ENCODE measurements at regions of chr2 and their contacts with region 1.

Region 1: DNA sequence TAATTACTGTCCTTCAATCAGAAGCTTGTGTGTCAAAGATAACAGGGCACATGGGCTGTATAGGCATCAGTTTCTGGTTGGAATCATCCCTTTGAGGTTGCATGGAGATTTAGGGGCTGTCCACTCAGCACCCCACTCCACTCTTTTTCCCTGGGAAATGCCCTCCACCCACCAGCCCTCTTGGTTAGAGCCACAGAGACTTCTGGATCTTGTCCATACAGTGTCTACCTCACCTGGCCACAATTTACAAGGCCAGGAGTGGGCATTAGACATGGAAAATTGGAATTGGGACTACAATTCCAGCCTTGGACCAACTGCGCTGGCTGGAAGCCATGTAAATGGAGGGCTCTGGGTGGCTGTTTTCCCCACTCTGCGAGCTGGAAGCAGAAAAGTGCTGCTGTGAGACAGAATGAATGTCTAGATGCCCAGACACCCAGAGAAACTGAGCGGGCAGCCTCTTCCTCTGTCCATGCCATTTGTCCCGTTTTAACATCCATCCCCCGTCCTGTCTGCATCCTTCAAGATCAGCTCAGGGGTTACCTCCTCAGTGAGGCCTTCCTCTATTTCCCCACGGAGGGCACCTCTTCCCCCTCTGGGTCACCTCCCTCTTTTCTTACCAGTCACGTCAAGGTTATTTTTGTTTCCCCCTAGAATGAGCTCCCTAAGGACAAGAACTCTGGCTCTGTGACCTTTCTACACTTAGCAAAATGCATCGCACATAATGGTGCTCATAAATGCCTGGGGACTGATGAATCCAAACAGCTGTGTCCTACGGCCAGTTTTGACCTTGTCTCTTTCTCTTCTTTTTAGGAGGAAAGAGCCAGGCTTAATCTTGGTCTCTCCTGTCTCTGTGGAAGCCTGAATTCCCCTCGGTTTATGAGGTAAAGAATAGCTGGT is 41.3 kb downstream of the MCFD2 start:
- DNase-seq: peak; percentile 68
- H3K4me3 ChIP-seq: no peak overlapping the region
- H3K27me3 ChIP-seq: no peaks in the 10 kb centered on the region
- CTCF ChIP-seq: no peak

Region 2: DNA sequence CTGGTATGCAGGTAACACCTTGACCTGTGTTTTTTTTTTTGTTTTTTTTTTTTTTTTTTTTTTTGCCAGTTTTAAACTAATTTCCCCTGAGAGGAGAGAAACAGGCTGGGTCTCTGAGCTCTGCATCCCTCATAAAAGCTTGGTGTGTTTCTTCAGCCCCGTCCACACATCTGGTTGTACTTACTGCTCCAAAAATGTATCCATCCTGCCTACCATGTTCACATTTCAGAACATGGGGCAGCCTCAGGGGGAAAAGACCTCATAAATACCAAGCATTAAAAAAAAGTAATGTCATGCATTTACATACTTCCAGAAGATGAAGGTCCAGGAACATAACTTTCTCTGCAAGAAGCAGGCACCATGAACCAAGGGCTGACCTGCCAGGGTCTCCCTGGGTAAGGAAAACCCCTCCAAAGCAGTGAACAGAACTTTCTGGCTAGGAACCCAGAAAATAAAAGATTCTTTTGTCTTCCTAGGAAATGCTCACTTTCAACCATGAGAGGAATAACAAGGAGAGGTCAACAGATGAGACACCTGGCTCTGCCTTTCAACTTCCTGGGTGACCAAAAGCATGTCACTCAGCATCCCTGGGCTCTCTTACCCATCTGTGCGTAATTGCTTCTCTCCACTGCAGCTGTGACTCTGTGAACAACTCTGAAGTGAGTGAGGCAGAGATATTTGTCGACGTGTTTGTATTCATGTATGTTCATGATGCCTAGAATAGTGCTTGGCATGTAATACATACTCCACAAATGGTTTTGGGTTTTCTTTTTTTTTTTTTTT is 77.2 kb before region 1 on chr2:
- CTCF ChIA-PET with region 1: interaction called, 4 read pairs
- POLR2A ChIA-PET with region 1: interaction called, 14 read pairs
- DNase-seq: peak; percentile 84
- H3K4me3 ChIP-seq: no peak overlapping the region
- H3K27me3 ChIP-seq: no peaks in the 10 kb centered on the region
- CTCF ChIP-seq: no peak